AG04450 (cell line): ENCODE measurements at regions of chr1 and their contacts with region 1.

Region 1: DNA sequence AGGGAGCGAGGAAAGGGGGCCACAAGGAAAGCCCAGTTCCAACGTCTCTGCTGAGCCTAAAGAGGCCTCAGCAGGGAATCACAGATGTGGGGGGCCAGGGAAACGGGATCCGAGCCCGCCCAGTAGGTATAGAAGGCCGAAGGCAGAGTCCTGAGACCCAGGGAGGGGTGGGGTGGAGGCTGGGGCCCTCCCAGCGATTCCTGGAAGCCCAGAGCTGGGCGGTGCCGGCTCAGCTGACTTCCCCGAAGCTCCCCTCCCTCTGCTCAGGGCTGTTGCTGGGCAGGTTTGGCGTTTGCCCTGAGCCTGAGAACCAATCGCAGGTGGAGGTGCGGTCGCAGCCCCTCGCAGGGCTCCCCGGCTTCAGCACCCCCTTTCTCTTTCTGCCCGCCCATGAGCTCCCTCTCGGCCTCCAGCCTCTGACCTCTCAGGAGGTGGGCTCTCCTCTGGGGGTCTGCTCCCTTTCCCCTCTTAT is 12.8 kb downstream of the ADAMTSL4 start:
- DNase-seq: peak; percentile 81
- H3K4me3 ChIP-seq: peak overlapping the region; percentile 67
- H3K27ac ChIP-seq: peak overlapping the region; percentile 100
- H3K27me3 ChIP-seq: no peaks in the 10 kb centered on the region
- CTCF ChIP-seq: no peak

Region 2: GRCh38 chr1:150529017-150529416 is 33.0 kb before region 1 on chr1:
- CTCF ChIA-PET with region 1: interaction called, 39 read pairs
- POLR2A ChIA-PET with region 1: interaction called, 3 read pairs
- DNase-seq: peak; percentile 29
- H3K4me3 ChIP-seq: no peak overlapping the region
- H3K27ac ChIP-seq: peak overlapping the region; percentile 57
- H3K27me3 ChIP-seq: no peaks in the 10 kb centered on the region
- CTCF ChIP-seq: no peak

Region 3: DNA sequence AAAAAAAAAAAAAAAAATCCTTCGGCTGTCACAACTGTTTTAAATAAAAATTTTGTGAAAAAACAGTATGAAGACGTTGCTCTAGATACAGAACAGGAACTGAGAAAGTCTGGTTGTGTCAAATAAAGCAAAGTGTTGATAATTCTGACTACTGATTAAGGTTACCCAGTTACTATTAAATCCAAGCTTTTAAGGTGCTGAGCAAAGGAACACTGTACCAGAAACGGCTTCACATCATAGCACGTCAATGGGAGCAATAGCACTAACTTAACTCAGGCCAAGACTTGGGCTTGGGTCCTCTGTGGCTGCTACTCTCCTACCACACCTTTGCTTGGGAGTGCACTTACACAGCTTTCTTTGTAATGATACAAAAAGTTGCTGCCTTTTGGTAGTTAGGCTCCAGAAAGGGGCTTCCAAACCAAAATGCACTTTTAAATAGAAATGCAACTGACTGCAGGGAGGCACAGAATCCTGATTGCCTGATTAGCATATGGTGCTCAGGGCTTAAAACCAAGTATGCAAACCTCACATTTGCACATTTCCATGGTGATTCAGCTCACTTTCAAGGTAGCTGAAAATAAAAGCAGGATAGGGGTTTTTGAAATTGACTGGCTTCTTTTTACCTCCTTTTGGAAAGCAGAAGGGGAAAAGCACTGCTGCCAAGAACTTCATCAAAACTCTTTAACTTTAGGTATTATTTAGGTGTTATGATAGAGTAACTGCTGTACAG is 11.1 kb after region 1 on chr1:
- CTCF ChIA-PET with region 1: interaction called, 59 read pairs
- POLR2A ChIA-PET with region 1: interaction called, 130 read pairs
- DNase-seq: no peak
- H3K4me3 ChIP-seq: peak overlapping the region; percentile 20
- H3K27ac ChIP-seq: no peak overlapping the region
- H3K27me3 ChIP-seq: no peaks in the 10 kb centered on the region
- CTCF ChIP-seq: no peak

Region 4: GRCh38 chr1:150613061-150613920 is 51.3 kb after region 1 on chr1:
- CTCF ChIA-PET with region 1: interaction called, 104 read pairs
- POLR2A ChIA-PET with region 1: interaction called, 4 read pairs
- DNase-seq: no peak
- H3K4me3 ChIP-seq: peak overlapping the region; percentile 5; the same call in 1 of the 2 replicates
- H3K27ac ChIP-seq: peak overlapping the region; percentile 85
- H3K27me3 ChIP-seq: no peaks in the 10 kb centered on the region
- CTCF ChIP-seq: no peak

Region 5: GRCh38 chr1:150696590-150697524 is 134.8 kb after region 1 on chr1 and contains the start of gene GOLPH3L:
- CTCF ChIA-PET with region 1: interaction called, 12 read pairs
- POLR2A ChIA-PET with region 1: no interaction called
- DNase-seq: peak; percentile 94
- H3K4me3 ChIP-seq: peak within 1 kb of the TSS; percentile 93
- H3K27ac ChIP-seq: no peak within 1 kb of the TSS
- H3K27me3 ChIP-seq: no peaks in the 10 kb centered on the region
- CTCF ChIP-seq: peak; percentile 30
- polyA plus RNA-seq, gene GOLPH3L: 31.7 and 35.0 TPM in 2 replicates

Region 6: GRCh38 chr1:150820710-150821512 is 258.9 kb after region 1 on chr1:
- CTCF ChIA-PET with region 1: interaction called, 13 read pairs
- POLR2A ChIA-PET with region 1: no interaction called
- DNase-seq: peak; percentile 16
- H3K4me3 ChIP-seq: no peak overlapping the region
- H3K27ac ChIP-seq: no peak overlapping the region
- H3K27me3 ChIP-seq: no peaks in the 10 kb centered on the region
- CTCF ChIP-seq: no peak